Activated CD4-positive, alpha-beta memory T cell treated with anti-CD3 and anti-CD28 coated beads for 36 hours (primary cell): ENCODE measurements at regions of chr2 and their contacts with region 1.

Region 1: GRCh38 chr2:174748948-174749347 is 15.3 kb downstream of the CHRNA1 start:
- DNase-seq: peak; percentile 81
- H3K4me3 Mint-ChIP-seq: no peak overlapping the region
- H3K27ac Mint-ChIP-seq: peak overlapping the region; percentile 45
- H3K4me1 Mint-ChIP-seq: peaks cover 45% of the 10 kb centered on the region
- H3K27me3 Mint-ChIP-seq: peaks cover 2% of the 10 kb centered on the region

Region 2: DNA sequence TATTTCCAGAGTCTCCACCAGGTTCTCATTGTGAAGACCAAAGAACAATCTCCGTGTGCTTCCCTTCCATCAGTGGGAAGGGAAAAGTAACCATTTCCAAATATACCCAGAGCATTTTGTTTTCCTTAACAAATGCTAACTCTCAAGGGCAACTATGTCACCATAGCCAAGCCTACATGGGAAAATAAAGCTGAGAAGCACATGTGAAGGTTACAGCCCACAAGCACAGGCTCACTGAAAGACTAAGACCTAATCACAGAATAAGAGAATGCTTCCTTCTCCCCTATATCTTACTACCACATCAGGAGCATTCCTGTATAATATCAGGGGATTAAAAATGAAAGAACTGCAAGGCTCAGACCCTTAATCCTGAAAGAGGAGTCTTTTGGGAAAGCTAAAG is 386.0 kb before region 1 on chr2:
- CTCF ChIA-PET with region 1: no interaction called
- POLR2A ChIA-PET with region 1: no interaction called
- intact Hi-C with region 1: no loop called
- DNase-seq: no peak
- H3K4me3 Mint-ChIP-seq: no peak overlapping the region
- H3K27ac Mint-ChIP-seq: no peak overlapping the region
- H3K4me1 Mint-ChIP-seq: no peaks in the 10 kb centered on the region
- H3K27me3 Mint-ChIP-seq: no peaks in the 10 kb centered on the region

Region 3: DNA sequence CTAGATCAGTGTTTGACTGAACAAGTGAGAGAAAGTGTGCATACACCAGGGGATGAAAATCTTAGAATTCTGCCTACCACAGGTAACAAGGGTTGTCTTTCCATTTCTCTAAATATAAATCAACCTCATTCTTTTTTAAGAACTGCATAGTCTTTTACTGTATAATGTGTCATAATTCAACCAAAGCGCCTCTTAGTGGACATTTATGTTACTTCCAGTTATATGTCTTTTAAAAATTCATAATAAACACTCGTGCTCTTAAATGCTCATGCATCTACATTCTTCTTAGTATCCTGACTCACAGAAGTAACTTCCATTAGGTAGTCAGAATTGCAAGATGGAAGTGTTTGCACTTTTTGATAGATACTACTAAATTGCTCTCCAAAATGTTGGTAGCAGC is 60.9 kb before region 1 on chr2:
- CTCF ChIA-PET with region 1: interaction called, 14 read pairs
- POLR2A ChIA-PET with region 1: no interaction called
- intact Hi-C with region 1: no loop called
- DNase-seq: no peak
- H3K4me3 Mint-ChIP-seq: no peak overlapping the region
- H3K27ac Mint-ChIP-seq: no peak overlapping the region
- H3K4me1 Mint-ChIP-seq: peaks cover 32% of the 10 kb centered on the region
- H3K27me3 Mint-ChIP-seq: no peaks in the 10 kb centered on the region

Region 4: GRCh38 chr2:174729797-174730697 is 18.9 kb before region 1 on chr2:
- CTCF ChIA-PET with region 1: interaction called, 13 read pairs
- POLR2A ChIA-PET with region 1: no interaction called
- intact Hi-C with region 1: loop called (anchors 2 kb)
- DNase-seq: peak; percentile 69
- H3K4me3 Mint-ChIP-seq: peak overlapping the region; percentile 77
- H3K27ac Mint-ChIP-seq: no peak overlapping the region
- H3K4me1 Mint-ChIP-seq: peaks cover 9% of the 10 kb centered on the region
- H3K27me3 Mint-ChIP-seq: peaks cover 3% of the 10 kb centered on the region

Region 5: DNA sequence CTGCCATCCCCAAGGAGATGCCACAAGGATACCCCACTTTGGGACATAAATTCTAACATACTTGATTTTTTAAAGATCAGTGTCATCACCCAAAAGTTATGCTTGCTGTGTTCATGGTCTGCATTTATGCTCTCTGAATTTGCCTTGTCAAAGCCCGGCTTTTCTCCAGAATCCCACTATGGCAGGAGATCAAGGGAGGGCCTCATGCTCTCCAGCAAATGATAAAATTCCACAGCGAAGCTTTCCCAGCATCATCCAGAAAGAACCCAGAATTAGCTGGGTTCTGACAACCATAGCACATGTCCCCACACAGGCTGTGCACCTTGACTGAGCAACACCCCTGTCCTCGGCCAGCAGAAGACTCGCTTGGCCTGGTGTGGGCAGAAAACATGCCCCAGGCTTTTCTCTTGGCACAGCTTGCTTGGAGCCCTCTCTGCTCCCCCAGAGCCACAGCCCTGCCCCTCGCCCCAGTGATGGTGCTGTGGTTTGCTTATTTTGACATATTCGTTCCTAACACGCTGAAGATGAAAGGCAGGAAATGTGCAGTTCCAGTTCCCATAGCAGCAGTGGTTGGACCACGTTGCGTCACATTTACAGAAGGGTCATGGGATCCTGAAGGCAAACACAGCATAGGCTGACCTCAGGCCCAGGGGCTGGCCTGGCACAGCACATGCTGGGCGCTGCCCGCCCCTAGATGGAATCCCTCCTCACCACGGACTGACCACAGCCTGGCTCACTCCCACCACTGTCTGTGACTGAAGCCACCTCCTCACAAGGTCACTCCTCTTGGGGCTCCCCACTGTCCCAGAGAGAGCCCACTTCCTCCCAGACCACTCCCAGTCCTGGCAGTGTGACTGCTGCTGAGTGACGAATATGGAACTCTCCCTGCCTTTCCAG is 29.4 kb after region 1 on chr2:
- CTCF ChIA-PET with region 1: interaction called, 58 read pairs
- POLR2A ChIA-PET with region 1: no interaction called
- intact Hi-C with region 1: loop called (anchors 1 kb)
- DNase-seq: peak; percentile 91
- H3K4me3 Mint-ChIP-seq: peak overlapping the region; percentile 17
- H3K27ac Mint-ChIP-seq: peak overlapping the region; percentile 79
- H3K4me1 Mint-ChIP-seq: peaks cover 42% of the 10 kb centered on the region
- H3K27me3 Mint-ChIP-seq: no peaks in the 10 kb centered on the region

Region 6: DNA sequence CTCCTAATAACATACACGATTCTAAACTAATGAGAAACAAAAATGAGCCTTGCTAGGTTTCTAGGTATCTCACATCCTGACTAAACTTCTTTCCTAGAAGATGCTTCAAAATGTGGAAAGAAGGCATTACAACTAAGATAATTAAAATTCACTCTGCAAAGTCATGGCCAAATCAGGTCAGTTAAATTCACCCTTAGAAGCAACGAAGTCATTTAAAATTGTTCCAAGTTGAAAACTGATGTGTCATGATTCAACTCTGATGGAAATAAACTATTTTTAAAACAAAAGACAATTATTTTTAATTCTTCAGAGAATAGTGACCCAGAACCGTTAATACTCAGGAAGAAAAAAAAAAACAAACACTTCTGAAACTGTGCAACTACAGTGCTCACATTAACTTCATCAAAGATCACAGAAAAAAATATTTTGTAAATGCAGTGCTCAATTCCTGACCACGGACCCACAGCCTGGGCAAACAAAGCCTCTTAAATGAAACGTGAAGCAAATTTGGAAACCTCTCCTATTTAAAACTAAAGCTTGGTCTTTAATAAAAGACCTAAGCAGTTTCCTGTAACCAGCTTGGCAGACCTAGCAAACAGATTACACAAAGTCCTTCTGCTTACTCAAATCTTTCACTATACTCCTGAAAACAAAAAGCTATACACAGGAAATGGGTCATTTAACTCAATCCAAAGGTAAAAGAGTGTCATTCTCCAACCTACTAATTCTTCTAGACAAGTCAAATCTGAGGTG is 217.2 kb after region 1 on chr2:
- CTCF ChIA-PET with region 1: interaction called, 6 read pairs
- POLR2A ChIA-PET with region 1: no interaction called
- intact Hi-C with region 1: loop called (anchors 2 kb)
- DNase-seq: no peak
- H3K4me3 Mint-ChIP-seq: no peak overlapping the region
- H3K27ac Mint-ChIP-seq: no peak overlapping the region
- H3K4me1 Mint-ChIP-seq: peaks cover 10% of the 10 kb centered on the region
- H3K27me3 Mint-ChIP-seq: peaks cover 5% of the 10 kb centered on the region

Region 7: DNA sequence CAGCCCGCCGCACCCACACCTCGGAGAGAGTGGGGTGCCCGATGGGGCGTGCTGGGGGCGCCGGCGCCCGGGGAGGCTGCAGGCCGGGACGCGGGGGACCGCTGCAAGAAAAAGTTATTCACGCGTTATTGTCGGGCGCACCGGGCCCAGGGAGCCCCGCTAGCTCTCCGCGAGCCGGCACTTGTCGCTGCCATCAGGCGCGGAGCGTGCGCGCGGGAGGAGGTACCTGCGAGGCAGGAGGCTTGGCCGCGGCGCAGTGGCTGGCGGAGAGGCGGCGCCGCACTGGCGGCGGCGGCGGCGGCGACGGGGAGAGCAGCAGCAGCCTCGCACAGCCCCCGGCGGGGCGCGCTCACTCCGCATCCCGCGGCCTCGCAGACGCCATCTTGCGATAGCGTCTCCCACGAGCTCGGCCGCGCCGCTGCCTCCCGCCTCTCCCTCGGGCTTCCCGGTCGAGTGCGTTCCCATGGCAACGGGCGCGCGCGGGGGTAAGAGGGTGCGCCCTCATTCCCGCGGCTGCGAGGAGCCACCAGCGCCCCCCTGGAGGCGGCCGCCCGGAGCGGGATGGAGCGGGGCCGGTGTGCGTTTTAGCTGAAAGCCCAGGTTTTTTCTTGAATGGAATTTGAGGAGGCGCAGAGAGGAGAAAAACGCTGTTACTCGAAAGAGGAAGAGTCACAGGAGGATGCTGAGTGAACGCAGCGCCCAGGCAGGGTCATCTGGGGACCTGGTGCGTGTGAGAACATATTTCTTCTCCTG is 256.2 kb after region 1 on chr2 and contains the start of gene CHN1:
- CTCF ChIA-PET with region 1: interaction called, 34 read pairs
- POLR2A ChIA-PET with region 1: interaction called, 4 read pairs
- intact Hi-C with region 1: no loop called
- DNase-seq: peak; percentile 73
- H3K4me3 Mint-ChIP-seq: peak within 1 kb of the TSS; percentile 74
- H3K27ac Mint-ChIP-seq: no peak within 1 kb of the TSS
- H3K4me1 Mint-ChIP-seq: peaks cover 4% of the 10 kb centered on the region
- H3K27me3 Mint-ChIP-seq: peaks cover 48% of the 10 kb centered on the region
- total RNA-seq, gene CHN1: 3.8 to 6.2 TPM

Region 8: DNA sequence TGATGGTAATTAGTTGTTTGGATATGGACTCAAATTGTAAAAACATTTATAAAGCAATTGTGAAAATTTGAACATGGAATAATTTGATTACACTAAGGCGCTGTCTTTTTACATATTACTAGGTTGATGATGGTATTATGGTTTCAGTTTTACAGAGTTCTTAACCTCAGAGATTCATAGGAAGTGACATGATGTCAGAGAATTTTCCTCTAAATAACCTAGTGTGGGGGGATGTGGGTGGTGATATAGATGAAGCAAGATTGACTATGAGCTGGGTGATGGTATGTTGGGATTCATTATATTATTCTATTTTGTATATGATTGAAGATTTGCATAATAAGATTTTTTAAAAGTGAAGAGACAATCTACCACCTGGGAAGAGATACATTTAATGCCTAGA is 478.4 kb after region 1 on chr2:
- CTCF ChIA-PET with region 1: interaction called, 3 read pairs
- POLR2A ChIA-PET with region 1: no interaction called
- intact Hi-C with region 1: loop called (anchors 5 kb)
- DNase-seq: no peak
- H3K4me3 Mint-ChIP-seq: no peak overlapping the region
- H3K27ac Mint-ChIP-seq: peak overlapping the region; percentile 46
- H3K4me1 Mint-ChIP-seq: peaks cover 18% of the 10 kb centered on the region
- H3K27me3 Mint-ChIP-seq: peaks cover 21% of the 10 kb centered on the region